Posterior vena cava (tissue), 2 donors: ENCODE measurements at regions of chr7 and their contacts with region 1.

Region 1: GRCh38 chr7:50349963-50350944 is 45.7 kb downstream of the IKZF1 start:
- DNase-seq: no peak

Region 2: DNA sequence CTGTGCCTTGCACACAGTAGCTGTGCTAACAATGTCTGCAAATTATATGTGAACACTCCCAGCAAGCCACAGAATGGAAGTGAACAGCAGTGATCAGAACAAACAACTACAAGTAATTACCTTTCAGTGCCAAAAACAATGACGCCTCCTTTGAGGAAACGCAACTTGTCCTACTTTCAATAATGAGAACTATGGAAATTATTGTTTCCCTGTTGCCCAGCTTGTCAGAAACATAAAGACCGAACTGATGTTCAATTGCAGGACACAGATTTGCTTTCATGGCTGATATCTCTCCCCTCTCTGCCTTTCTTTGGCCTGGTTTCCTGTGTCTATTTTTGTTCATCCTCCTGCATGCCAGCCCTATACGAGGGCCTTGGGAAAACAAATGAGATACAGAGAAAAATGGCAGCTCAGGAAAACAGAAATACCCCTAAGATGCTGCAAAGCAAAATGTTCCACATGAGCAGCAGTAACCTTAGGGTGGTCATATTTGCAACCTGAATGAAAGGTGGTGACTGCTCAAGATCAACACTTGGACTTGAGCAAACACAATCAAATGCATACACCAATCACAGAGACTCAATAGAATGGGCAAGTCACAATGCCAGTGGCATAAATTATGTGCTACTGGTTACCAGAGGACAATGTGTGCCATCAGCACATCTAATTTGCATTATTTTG is 939.5 kb after region 1 on chr7:
- intact Hi-C with region 1: loop called in 1 of 2 experiments (anchors 5 kb)
- DNase-seq: no peak